Keratinocyte (primary cell): ENCODE measurements at regions of chr17 and their contacts with region 1.

Region 1: GRCh38 chr17:79114458-79115301 is 40.1 kb downstream of the ENGASE start:
- DNase-seq: no peak
- H3K4me3 ChIP-seq: no peak overlapping the region
- H3K27ac ChIP-seq: no peak overlapping the region
- H3K4me1 ChIP-seq: no peaks in the 10 kb centered on the region
- H3K27me3 ChIP-seq: peaks cover 94% of the 10 kb centered on the region
- CTCF ChIP-seq: no peak

Region 2: GRCh38 chr17:78993241-78993956 is 121.3 kb before region 1 on chr17:
- dilution Hi-C with region 1: no loop called
- DNase-seq: no peak
- H3K4me3 ChIP-seq: no peak overlapping the region
- H3K27ac ChIP-seq: no peak overlapping the region
- H3K4me1 ChIP-seq: peaks cover 12% of the 10 kb centered on the region
- H3K27me3 ChIP-seq: no peaks in the 10 kb centered on the region
- CTCF ChIP-seq: peak; percentile 81 to 84 (median 83)

Region 3: DNA sequence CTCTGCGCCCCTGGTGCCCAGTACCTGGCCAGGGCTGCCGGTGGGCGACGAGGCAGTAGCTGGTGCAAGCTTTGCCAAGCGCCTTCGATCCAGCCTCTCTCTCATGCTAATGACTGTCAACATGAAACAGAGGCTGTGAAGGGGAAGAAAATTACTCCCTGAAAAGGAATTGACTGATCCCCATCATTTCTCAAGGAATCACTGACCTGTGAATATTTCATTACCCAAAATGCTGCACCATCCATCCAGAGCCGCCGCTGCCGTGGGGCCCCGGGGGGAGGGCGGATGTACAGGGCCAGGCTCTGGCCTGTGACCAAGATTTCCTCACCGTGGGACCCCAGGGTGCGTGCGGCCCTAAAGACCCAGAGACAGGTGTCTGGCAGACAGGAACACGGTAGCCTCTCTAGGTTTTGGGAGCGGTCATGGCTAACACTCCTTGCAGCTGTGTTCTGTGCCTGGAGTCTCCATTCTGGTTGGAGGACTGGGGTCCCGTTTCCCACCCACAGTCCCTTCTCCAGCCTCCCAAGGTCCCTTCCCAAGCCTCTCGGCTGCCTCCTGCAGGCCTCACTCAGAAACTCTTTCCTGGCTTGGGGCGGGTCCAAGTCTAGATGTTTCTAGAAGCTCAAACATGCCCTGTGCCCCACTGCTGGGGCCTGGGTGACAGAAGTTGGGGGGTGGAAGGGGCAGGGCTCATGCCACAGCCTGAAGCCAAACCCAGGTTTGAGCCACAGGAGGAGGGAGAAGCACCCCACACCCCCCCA is 33.2 kb after region 1 on chr17:
- dilution Hi-C with region 1: loop called (anchors 5 kb)
- DNase-seq: no peak
- H3K4me3 ChIP-seq: no peak overlapping the region
- H3K27ac ChIP-seq: no peak overlapping the region
- H3K4me1 ChIP-seq: no peaks in the 10 kb centered on the region
- H3K27me3 ChIP-seq: peaks cover 21% of the 10 kb centered on the region
- CTCF ChIP-seq: peak in 1 of 3 experiments; percentile 40